Activated CD4-positive, alpha-beta T cell treated with anti-CD3 and anti-CD28 coated beads for 36 hours (primary cell): ENCODE measurements at regions of chr17 and their contacts with region 1.

Region 1: GRCh38 chr17:8109661-8110464 is 8.5 kb downstream of the ALOXE3 start:
- DNase-seq: peak; percentile 90
- ATAC-seq: peak; percentile 97
- H3K4me3 Mint-ChIP-seq: peak overlapping the region; percentile 34
- H3K27ac Mint-ChIP-seq: no peak overlapping the region
- H3K4me1 Mint-ChIP-seq: peaks cover 5% of the 10 kb centered on the region
- H3K27me3 Mint-ChIP-seq: peaks cover 19% of the 10 kb centered on the region

Region 2: GRCh38 chr17:8091033-8091687 is 18.7 kb before region 1 on chr17:
- CTCF ChIA-PET with region 1: interaction called, 64 read pairs
- POLR2A ChIA-PET with region 1: interaction called, 3 read pairs
- intact Hi-C with region 1: no loop called
- DNase-seq: no peak
- ATAC-seq: no peak
- H3K4me3 Mint-ChIP-seq: no peak overlapping the region
- H3K27ac Mint-ChIP-seq: no peak overlapping the region
- H3K4me1 Mint-ChIP-seq: peaks cover 14% of the 10 kb centered on the region
- H3K27me3 Mint-ChIP-seq: peaks cover 5% of the 10 kb centered on the region